ENCODE measurements at regions of chr1 and their contacts with region 1.

Region 1: DNA sequence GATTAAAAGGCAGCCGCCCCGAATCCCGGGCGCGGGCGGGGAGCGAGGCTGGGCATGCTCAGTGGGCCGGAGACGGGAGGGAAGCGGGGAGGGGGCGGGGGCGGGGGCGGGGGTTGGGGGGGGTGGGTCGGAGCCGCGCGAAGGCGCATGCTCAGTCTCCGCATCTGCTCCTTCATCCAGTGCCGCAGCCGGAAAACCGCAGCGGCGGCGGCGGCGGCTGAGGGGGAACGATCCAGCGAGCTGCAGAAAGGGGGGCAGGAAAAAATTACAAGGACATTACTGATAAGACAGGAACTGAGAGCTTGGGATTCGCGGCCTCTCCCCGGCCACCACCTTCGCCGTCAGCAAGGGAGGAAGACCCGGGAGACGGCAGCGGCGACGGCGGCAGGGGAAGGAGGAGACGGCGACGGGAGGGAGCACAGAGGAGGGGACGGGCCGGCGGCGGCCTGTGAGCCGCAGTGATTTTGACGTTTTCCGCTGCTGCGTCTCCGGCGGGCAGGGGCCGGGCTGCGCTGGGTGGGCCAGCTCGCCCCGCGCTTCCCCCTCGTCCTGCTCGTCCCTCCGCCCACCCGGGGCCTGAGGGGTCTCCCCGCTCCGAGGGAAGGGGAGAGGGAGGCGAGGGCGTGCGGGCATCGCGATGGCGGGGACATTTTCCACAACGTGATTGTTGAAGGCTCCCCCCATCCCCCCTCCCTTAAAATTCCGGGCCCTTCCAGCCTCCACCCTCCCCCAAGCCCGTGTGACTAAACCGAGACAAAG is at the start of gene CAMSAP2:
- DNase-seq: peak; percentile 95 to 97
- H3K4me3 ChIP-seq: peak within 1 kb of the TSS; percentile 83 to 91 (median 89)
- H3K27ac ChIP-seq: peak within 1 kb of the TSS; percentile 99 to 100 (median 100)
- H3K4me1 ChIP-seq: peaks cover 17 to 33% of the 10 kb centered on the region in 2 donors
- H3K27me3 ChIP-seq: no peaks in the 10 kb centered on the region
- CTCF ChIP-seq: no peak
- POLR2A ChIP-seq: peak; percentile 74 to 84
- total RNA-seq, gene CAMSAP2: 36.3 to 53.5 (median 41.8) TPM

Region 2: DNA sequence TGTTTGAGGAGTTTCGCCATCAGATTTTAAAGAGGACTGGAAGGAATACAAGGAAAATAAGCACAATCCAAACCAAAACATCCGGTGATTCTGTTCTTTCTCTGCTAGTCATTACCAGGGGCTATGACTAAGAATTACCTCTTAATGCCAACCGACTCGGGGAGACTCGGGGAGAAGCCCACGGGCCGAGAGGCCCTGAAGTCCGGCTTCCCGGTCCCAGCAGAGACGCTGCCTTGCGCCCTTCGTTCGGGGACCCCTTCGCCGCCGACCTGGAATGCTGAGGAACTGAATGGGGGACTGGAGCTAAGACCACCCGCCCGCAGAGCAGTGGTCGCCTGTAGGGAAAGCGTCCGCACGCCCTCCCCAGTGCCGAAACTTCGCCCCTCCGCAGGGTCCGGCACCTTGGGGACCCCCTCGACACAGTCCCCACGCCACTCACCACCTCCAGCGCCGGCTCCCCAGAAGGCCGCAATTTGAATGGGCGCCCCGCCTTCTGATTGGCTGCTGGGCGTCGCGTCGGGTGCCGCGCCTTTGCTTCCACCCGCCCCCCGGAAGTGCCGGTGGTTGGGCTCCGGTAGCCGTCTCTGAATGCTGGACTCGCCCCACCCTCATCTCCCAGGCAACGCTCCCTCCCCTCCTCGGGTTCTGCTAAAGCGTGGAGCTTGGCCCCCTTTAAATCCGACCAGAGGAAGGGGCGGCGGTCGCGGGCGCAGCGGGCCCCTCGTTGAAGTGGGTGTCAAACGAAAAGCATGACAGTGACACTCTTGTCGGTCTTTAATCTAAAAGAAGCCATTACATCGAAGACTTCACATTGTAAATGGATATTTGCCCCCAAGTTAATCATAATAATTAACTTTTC is 118.4 kb before region 1 on chr1 and contains the start of gene KIF14:
- intact Hi-C with region 1: loop called (anchors 10 kb)
- DNase-seq: peak; percentile 93
- H3K4me3 ChIP-seq: peak within 1 kb of the TSS in 2 of 3 donors; percentile 47 to 81
- H3K27ac ChIP-seq: no peak within 1 kb of the TSS
- H3K4me1 ChIP-seq: peaks cover 0 to 7% of the 10 kb centered on the region in 2 donors
- H3K27me3 ChIP-seq: no peaks in the 10 kb centered on the region
- CTCF ChIP-seq: no peak
- POLR2A ChIP-seq: no peak
- total RNA-seq, gene KIF14: 0.05 to 0.42 (median 0.18) TPM

Region 3: GRCh38 chr1:200669314-200670241 is 69.3 kb before region 1 on chr1 and contains the start of gene DDX59:
- intact Hi-C with region 1: loop called (anchors 5 kb)
- DNase-seq: peak; percentile 97
- H3K4me3 ChIP-seq: peak within 1 kb of the TSS; percentile 50 to 72 (median 54)
- H3K27ac ChIP-seq: peak within 1 kb of the TSS; percentile 98 to 100 (median 99)
- H3K4me1 ChIP-seq: peaks cover 0 to 13% of the 10 kb centered on the region in 2 donors
- H3K27me3 ChIP-seq: no peaks in the 10 kb centered on the region
- CTCF ChIP-seq: peak in 1 of 6 experiments; percentile 2
- POLR2A ChIP-seq: peak; percentile 53 to 87
- total RNA-seq, gene DDX59: 18.3 to 33.2 (median 28.7) TPM

Region 4: DNA sequence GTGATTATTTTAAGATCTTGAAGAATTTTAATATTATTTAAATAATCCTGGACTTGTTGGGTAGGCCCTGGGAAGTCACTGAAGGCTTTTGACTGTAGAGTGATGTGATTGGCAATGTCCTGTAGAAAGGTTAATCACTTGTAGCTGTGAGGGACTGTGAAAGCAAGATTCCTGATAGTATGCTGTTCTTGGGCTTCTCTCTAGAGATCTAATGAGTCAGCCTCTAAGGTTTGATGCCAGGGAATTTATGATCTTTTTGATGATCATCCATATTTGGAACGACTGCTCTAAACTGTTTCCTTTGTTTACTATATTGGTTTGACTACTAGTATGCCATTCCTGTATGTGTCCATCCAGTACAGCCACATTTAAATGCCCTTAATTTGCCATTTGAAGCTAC is 56.2 kb after region 1 on chr1:
- intact Hi-C with region 1: loop called (anchors 10 kb)
- DNase-seq: no peak
- H3K4me3 ChIP-seq: no peak overlapping the region
- H3K27ac ChIP-seq: no peak overlapping the region
- H3K4me1 ChIP-seq: peaks cover 15 to 20% of the 10 kb centered on the region in 2 donors
- H3K27me3 ChIP-seq: no peaks in the 10 kb centered on the region
- CTCF ChIP-seq: no peak
- POLR2A ChIP-seq: no peak